ENCODE measurements at regions of chr15 and their contacts with region 1.

Region 1: GRCh38 chr15:80567721-80568157 is 127.4 kb upstream of the ABHD17C start:
- DNase-seq: peak; percentile 72
- ATAC-seq: peak; percentile 96
- H3K4me3 ChIP-seq: no peak overlapping the region
- H3K27ac ChIP-seq: no peak overlapping the region
- H3K4me1 ChIP-seq: no peaks in the 10 kb centered on the region
- H3K27me3 ChIP-seq: no peaks in the 10 kb centered on the region
- CTCF ChIP-seq: peak; percentile 87
- EP300 ChIP-seq: no peak
- POLR2A ChIP-seq: no peak
- RAD21 ChIP-seq: peak; percentile 78

Region 2: GRCh38 chr15:80010131-80010673 is 557.5 kb before region 1 on chr15:
- CTCF ChIA-PET with region 1: no interaction called
- POLR2A ChIA-PET with region 1: no interaction called
- in situ Hi-C with region 1: no loop called
- intact Hi-C with region 1: no loop called
- DNase-seq: no peak
- ATAC-seq: no peak
- H3K4me3 ChIP-seq: no peak overlapping the region
- H3K27ac ChIP-seq: no peak overlapping the region
- H3K4me1 ChIP-seq: peaks cover 32% of the 10 kb centered on the region
- H3K27me3 ChIP-seq: no peaks in the 10 kb centered on the region
- CTCF ChIP-seq: no peak
- EP300 ChIP-seq: no peak
- POLR2A ChIP-seq: no peak
- RAD21 ChIP-seq: no peak

Region 3: GRCh38 chr15:80455668-80456442 is 111.9 kb before region 1 on chr15:
- CTCF ChIA-PET with region 1: interaction called, 3 read pairs
- POLR2A ChIA-PET with region 1: no interaction called
- in situ Hi-C with region 1: no loop called
- intact Hi-C with region 1: loop called (anchors 1 kb)
- DNase-seq: peak; percentile 44
- ATAC-seq: peak; percentile 68
- H3K4me3 ChIP-seq: no peak overlapping the region
- H3K27ac ChIP-seq: no peak overlapping the region
- H3K4me1 ChIP-seq: peaks cover 46% of the 10 kb centered on the region
- H3K27me3 ChIP-seq: no peaks in the 10 kb centered on the region
- CTCF ChIP-seq: peak; percentile 91
- EP300 ChIP-seq: no peak
- POLR2A ChIP-seq: no peak
- RAD21 ChIP-seq: peak; percentile 80

Region 4: GRCh38 chr15:80660122-80660521 is 92.4 kb after region 1 on chr15:
- CTCF ChIA-PET with region 1: no interaction called
- POLR2A ChIA-PET with region 1: no interaction called
- in situ Hi-C with region 1: no loop called
- intact Hi-C with region 1: loop called (anchors 1 kb)
- DNase-seq: peak; percentile 42
- ATAC-seq: peak; percentile 96
- H3K4me3 ChIP-seq: no peak overlapping the region
- H3K27ac ChIP-seq: no peak overlapping the region
- H3K4me1 ChIP-seq: no peaks in the 10 kb centered on the region
- H3K27me3 ChIP-seq: no peaks in the 10 kb centered on the region
- CTCF ChIP-seq: peak; percentile 77
- EP300 ChIP-seq: no peak
- POLR2A ChIP-seq: no peak
- RAD21 ChIP-seq: 0 out of 2 replicates have a peak, but pooled peaks have one; percentile 40

Region 5: DNA sequence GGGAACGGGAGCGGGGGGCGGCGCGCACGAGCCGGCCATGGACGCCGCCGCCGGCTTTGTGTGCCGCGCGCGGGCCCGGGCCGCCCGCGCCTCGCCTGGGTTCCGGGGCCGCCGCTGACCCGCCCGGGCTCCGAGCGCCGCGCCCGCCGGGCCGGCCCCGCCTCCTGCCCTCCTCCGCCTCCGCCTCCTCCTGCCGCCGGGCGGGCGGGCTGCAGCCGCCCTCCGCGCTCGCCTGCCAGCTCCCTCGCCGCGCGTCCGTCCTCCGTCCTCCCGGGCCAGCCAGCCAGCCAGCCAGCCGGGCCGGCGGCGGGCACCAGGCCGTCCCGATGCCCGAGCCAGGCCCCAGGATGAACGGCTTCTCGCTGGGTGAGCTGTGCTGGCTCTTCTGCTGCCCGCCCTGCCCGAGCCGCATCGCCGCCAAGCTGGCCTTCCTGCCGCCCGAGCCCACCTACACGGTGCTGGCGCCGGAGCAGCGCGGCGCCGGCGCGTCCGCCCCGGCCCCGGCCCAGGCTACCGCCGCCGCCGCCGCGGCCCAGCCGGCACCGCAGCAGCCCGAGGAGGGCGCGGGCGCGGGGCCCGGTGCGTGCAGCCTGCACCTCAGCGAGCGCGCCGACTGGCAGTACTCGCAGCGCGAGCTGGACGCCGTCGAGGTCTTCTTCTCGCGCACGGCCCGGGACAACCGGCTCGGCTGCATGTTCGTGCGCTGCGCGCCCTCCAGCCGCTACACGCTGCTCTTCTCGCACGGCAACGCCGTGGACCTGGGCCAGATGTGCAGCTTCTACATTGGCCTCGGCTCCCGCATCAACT is 127.6 kb after region 1 on chr15 and contains the start of gene ABHD17C:
- CTCF ChIA-PET with region 1: interaction called, 10 read pairs
- POLR2A ChIA-PET with region 1: interaction called, 6 read pairs
- in situ Hi-C with region 1: no loop called
- intact Hi-C with region 1: no loop called
- DNase-seq: peak; percentile 9
- ATAC-seq: peak; percentile 79
- H3K4me3 ChIP-seq: peak within 1 kb of the TSS; percentile 54 to 79 (median 75)
- H3K27ac ChIP-seq: no peak within 1 kb of the TSS
- H3K4me1 ChIP-seq: peaks cover 35% of the 10 kb centered on the region
- H3K27me3 ChIP-seq: peaks cover 0 to 34% of the 10 kb centered on the region in 2 experiments; a peak in 4 of 5 replicates
- CTCF ChIP-seq: no peak
- EP300 ChIP-seq: no peak
- POLR2A ChIP-seq: no peak
- RAD21 ChIP-seq: no peak
- total RNA-seq, gene ABHD17C: 2.9 and 4.7 TPM in 2 replicates

Region 6: DNA sequence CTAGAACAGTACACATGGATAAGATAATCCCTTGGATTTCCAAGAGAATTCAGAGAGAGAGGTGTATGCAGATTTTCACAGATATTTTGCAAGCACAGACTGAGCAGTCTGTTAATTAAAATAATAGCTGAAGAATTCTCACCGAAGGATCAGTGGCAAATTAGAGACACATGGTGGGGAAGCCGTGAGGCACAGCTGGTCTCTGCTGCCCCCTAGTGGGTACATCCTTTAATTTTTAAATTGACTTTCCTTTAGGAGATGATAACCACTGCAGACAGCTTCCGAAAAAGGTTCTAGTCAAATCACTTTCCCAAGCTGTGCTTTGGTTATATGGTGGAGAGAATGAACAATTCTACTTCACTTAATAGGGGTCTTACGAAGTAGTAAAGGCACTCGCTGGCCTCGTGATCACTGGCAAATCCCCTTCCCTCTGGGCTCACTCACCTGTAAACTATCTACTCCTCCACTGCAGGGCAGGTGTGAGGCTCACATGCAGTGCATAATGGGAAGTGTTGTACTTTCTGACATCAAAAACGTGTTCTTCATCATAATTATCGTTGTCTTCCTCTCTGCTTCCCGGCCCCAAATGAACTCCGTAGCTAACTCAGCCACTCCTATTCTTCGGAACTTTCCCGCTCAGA is 402.4 kb after region 1 on chr15:
- CTCF ChIA-PET with region 1: interaction called, 10 read pairs
- POLR2A ChIA-PET with region 1: no interaction called
- in situ Hi-C with region 1: loop called (anchors 10 kb)
- intact Hi-C with region 1: loop called (anchors 5 kb)
- DNase-seq: peak; percentile 35
- ATAC-seq: peak; percentile 76
- H3K4me3 ChIP-seq: no peak overlapping the region
- H3K27ac ChIP-seq: no peak overlapping the region
- H3K4me1 ChIP-seq: no peaks in the 10 kb centered on the region
- H3K27me3 ChIP-seq: no peaks in the 10 kb centered on the region
- CTCF ChIP-seq: peak; percentile 81
- EP300 ChIP-seq: no peak
- POLR2A ChIP-seq: no peak
- RAD21 ChIP-seq: peak; percentile 71

Region 7: GRCh38 chr15:81548365-81549120 is 980.8 kb after region 1 on chr15:
- CTCF ChIA-PET with region 1: no interaction called
- POLR2A ChIA-PET with region 1: no interaction called
- in situ Hi-C with region 1: no loop called
- intact Hi-C with region 1: no loop called
- DNase-seq: no peak
- ATAC-seq: no peak
- H3K4me3 ChIP-seq: no peak overlapping the region
- H3K27ac ChIP-seq: no peak overlapping the region
- H3K4me1 ChIP-seq: no peaks in the 10 kb centered on the region
- H3K27me3 ChIP-seq: no peaks in the 10 kb centered on the region
- CTCF ChIP-seq: no peak
- EP300 ChIP-seq: no peak
- POLR2A ChIP-seq: no peak
- RAD21 ChIP-seq: no peak